Activated CD8-positive, alpha-beta T cell treated with anti-CD3 and anti-CD28 coated beads, Interleukin-2, amount 10 ng/mL, durations not matched to agents 7 days and 5 days (primary cell): ENCODE measurements at regions of chr11 and their contacts with region 1.

Region 1: GRCh38 chr11:18243783-18244362 is 4.6 kb downstream of the SAA2 start:
- DNase-seq: peak; percentile 83
- ATAC-seq: peak; percentile 45
- H3K4me3 Mint-ChIP-seq: no peak overlapping the region
- H3K27ac Mint-ChIP-seq: peak overlapping the region; percentile 5
- H3K4me1 Mint-ChIP-seq: peaks cover 37% of the 10 kb centered on the region
- H3K27me3 Mint-ChIP-seq: peaks cover 19% of the 10 kb centered on the region

Region 2: DNA sequence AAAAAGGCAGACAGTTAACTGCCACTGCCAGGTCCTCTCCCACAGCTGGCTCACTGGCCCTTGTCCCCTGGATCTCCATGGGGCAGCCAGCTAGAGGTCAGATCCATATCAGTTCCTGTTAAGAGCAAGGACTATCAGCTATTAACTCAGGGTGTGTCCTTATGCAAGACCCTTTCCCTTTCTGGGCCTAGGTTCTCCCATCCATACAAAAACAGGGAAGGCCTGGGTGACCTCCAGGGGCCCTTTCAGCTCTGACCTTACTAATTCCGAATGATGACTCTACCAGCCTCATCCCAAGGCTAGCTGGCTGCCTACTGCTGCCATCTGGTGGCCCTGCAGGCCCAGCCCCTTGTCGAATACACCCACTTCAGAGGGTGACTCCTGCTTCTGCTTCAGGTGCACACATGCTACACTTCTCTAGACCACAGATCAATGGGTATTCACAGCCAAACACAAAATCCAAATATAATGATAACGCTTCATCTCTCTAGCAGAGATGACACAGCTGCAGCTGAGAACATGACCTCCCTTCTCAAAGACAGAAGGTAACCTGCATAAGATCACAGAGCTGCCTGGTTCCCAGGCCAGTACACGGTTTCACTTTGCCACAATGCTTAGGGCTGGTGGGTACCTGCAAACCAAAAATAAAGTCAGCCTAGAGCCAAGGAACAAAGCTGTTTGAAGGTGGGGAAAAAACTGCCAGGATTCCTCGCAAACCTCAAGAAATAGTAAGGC is 265.2 kb before region 1 on chr11:
- CTCF ChIA-PET with region 1: no interaction called
- POLR2A ChIA-PET with region 1: no interaction called
- DNase-seq: peak; percentile 34
- ATAC-seq: peak; percentile 42
- H3K4me3 Mint-ChIP-seq: no peak overlapping the region
- H3K27ac Mint-ChIP-seq: no peak overlapping the region
- H3K4me1 Mint-ChIP-seq: no peaks in the 10 kb centered on the region
- H3K27me3 Mint-ChIP-seq: no peaks in the 10 kb centered on the region

Region 3: DNA sequence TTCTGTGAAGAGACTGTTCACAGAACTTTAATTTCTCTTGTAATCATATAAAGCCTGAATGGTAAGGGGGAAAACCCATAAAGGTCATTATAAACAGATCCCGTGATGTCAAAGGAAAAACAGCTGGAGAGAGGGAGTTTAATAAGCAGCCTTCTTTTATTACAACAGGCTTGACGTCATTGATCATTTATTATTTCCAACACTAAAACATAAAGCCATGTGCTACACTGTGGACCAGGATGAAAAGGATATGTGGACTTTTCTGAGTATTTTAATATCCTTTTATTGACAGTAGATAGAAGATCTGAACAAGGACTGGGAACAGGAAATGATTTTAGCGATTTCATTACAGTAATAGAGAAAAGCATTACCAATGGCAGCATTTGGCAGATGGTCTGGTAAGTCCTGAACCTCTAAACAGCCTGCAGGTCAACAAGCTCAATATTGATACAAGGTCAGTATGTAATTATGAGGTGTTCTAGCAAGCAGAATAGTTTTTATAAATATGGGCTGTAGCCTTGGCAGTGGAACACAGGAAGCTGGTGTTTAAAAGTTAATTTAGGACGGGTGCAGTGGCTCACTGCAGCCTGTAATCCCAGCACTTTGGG is 172.7 kb before region 1 on chr11:
- CTCF ChIA-PET with region 1: no interaction called
- POLR2A ChIA-PET with region 1: no interaction called
- DNase-seq: no peak
- ATAC-seq: no peak
- H3K4me3 Mint-ChIP-seq: no peak overlapping the region
- H3K27ac Mint-ChIP-seq: no peak overlapping the region
- H3K4me1 Mint-ChIP-seq: peaks cover 3% of the 10 kb centered on the region
- H3K27me3 Mint-ChIP-seq: no peaks in the 10 kb centered on the region

Region 4: DNA sequence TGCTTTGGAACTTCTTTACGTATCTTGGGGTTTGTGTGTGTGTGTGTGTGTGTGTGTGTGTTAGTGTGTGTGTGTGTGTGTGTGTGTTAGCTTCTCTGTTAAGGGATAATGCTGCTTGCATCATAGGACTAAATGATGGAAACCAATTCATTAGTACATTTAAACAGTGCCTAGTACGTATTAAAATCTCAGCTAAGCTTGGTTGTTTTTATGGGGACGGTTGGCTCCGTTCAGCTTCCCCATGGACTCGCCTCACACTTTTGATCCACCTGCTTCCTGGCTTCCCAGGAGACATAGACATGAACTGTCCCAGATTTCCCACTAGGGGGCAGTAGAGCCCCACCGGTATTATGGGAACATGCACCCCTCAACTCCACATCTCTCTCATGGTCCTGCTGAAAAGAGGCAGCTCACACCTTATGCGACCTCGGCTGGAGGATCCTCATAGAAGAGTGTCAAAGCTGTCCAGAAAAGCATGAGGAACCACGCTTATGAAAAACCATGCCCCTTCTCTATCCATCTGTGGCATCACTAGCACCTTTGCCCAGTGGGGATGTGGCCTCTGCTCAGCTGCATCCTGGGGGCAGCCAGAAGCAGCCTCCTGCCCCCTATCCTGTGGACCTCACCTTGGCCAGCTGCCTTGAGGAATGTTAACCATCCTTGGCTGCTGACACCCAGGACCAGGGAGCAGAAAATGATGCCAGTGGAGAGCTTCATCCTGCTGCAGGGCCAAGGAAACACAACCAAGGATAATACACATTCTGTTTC is 128.3 kb before region 1 on chr11:
- CTCF ChIA-PET with region 1: interaction called, 11 read pairs
- POLR2A ChIA-PET with region 1: no interaction called
- DNase-seq: peak; percentile 73
- ATAC-seq: peak; percentile 94
- H3K4me3 Mint-ChIP-seq: no peak overlapping the region
- H3K27ac Mint-ChIP-seq: no peak overlapping the region
- H3K4me1 Mint-ChIP-seq: no peaks in the 10 kb centered on the region
- H3K27me3 Mint-ChIP-seq: peaks cover 29% of the 10 kb centered on the region

Region 5: GRCh38 chr11:18332302-18332701 is 88.4 kb after region 1 on chr11:
- CTCF ChIA-PET with region 1: interaction called, 13 read pairs
- POLR2A ChIA-PET with region 1: no interaction called
- DNase-seq: no peak
- ATAC-seq: peak; percentile 46
- H3K4me3 Mint-ChIP-seq: no peak overlapping the region
- H3K27ac Mint-ChIP-seq: peak overlapping the region; percentile 84
- H3K4me1 Mint-ChIP-seq: peaks cover 37% of the 10 kb centered on the region
- H3K27me3 Mint-ChIP-seq: no peaks in the 10 kb centered on the region

Region 6: DNA sequence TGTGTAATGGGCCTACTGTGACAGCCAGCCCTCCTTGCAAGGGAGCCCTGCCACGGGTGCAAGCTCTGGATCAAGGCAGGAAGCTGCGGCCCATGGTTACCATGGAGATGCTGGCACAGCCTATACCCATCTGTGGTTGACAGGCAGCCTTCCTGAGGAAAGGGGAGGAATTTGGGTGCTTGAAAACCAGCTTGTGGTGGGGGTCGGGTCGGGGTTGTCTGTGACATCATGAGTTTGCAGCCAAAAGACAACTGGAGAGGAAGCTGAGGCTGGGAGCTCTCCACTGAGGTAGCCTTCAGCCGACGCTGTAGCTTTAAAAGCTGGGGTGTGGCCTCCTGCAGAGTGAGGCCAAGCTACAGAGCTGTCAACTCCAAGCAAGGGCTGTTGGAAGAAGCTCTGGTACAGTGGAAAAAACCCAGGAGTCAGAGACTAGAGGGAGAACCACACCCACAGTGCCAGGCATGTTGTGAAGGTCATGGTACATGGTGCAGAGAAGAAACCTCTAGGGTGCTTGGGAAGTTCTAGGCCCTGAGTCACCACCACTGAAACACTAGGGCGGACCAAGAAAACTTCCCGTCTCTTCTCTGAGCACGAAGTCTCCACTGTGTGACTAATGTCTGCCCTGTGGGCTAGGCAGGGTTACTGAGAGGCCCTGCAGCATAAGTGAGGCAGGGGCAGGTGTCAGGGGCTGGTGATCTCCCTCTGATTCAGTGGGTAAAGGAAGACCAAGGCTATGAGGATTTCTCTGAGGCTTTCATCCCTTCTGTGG is 139.7 kb after region 1 on chr11:
- CTCF ChIA-PET with region 1: interaction called, 13 read pairs
- POLR2A ChIA-PET with region 1: interaction called, 6 read pairs
- DNase-seq: peak; percentile 82
- ATAC-seq: peak; percentile 78
- H3K4me3 Mint-ChIP-seq: peak overlapping the region; percentile 69
- H3K27ac Mint-ChIP-seq: peak overlapping the region; percentile 99
- H3K4me1 Mint-ChIP-seq: peaks cover 51% of the 10 kb centered on the region
- H3K27me3 Mint-ChIP-seq: no peaks in the 10 kb centered on the region

Region 7: DNA sequence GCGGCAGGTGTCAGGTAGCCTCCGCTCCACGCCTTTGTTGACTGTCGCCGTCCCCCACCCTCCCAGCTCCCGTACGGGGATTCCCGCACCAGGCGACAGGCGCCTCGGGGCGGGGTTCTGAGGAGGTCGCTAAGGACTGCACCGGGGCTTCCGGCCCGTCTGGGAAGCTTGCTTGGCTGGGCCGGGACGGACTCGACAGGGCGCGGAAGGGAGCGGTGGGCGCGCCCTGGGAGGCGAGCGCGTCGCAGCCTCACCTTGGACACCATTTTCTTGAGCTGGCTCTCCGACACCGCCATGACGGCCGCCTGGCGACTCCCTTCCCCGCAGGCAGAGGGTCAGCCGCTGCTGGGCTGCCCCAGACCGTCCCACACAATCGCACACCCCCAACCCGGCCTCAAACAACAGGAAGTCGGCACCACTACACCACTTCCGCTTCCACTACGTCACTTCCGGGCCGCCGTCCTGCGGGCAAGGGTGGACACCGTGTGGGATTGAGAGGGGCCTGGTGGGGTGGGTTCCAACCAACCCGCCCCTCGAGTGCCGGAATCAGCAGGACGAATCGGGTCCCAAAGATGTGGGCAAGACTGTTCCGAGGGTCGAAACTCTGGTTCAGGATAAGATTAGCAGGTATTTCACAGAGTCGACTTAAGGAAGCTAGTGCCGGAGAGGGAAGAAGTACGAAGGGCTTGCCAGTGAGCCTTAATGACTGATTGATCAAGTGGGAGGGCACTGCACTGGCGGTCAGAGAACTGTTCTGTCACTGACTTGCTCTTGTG is 282.8 kb after region 1 on chr11 and contains the start of gene TSG101:
- CTCF ChIA-PET with region 1: interaction called, 18 read pairs
- POLR2A ChIA-PET with region 1: no interaction called
- DNase-seq: peak; percentile 93
- ATAC-seq: peak; percentile 81
- H3K4me3 Mint-ChIP-seq: peak within 1 kb of the TSS; percentile 99
- H3K27ac Mint-ChIP-seq: peak within 1 kb of the TSS; percentile 99
- H3K4me1 Mint-ChIP-seq: peaks cover 33% of the 10 kb centered on the region
- H3K27me3 Mint-ChIP-seq: no peaks in the 10 kb centered on the region
- total RNA-seq, gene TSG101: 33.5 to 48.7 TPM

Region 8: GRCh38 chr11:18721561-18722292 is 477.9 kb after region 1 on chr11:
- CTCF ChIA-PET with region 1: interaction called, 10 read pairs
- POLR2A ChIA-PET with region 1: no interaction called
- DNase-seq: peak; percentile 66
- ATAC-seq: peak; percentile 56
- H3K4me3 Mint-ChIP-seq: peak overlapping the region; percentile 79
- H3K27ac Mint-ChIP-seq: peak overlapping the region; percentile 18
- H3K4me1 Mint-ChIP-seq: peaks cover 12% of the 10 kb centered on the region
- H3K27me3 Mint-ChIP-seq: peaks cover 15% of the 10 kb centered on the region